CD8-positive, alpha-beta T cell (primary cell): ENCODE measurements at regions of chr11 and their contacts with region 1.

Region 1: DNA sequence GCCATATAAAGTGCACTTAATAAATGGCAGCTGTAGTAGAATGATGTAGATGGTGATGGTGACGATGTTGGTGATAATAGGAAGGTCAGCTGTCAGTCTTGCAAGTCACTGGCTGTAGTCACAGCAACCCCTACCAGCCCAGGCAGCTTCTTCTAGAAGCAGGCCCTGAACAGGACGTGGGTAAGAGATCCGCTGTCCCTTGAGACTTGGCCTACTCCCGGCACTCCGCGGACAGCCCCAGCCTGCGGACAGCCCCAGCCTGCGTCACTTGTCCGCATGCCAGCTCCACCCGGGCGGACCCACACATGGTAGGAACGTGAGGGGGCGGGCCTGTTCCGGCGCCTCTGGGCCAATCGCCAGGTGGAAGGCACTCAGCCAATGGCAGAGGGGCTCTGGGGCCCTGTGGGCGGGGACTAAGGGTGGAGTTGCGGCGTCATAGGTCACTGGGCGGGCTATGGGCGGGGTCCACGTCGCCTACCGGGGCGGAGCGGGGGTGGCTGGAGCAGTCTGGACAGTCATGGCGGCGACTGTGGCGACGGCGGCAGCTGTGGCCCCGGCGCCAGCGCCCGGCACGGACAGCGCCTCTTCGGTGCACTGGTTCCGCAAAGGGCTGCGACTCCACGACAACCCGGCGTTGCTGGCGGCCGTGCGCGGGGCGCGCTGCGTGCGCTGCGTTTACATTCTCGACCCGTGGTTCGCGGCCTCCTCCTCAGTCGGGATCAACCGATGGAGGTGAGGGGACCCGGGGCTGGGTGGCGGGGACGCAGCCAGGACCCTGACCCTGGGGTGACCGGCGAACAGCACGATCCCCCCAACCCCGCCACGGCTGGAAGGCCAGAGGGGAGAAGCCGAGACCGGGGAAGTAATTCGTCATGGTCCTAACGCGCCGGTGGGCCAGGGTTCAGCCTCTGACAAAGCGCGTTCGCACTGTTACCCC is at the start of gene CRY2:
- DNase-seq: peak; percentile 98 to 99 (median 98)
- ATAC-seq: peak; percentile 86
- H3K4me3 ChIP-seq: peak within 1 kb of the TSS; percentile 81 to 96
- H3K4me3 Mint-ChIP-seq: peak within 1 kb of the TSS; percentile 82
- H3K27ac ChIP-seq: peak within 1 kb of the TSS; percentile 88 to 96
- H3K27ac Mint-ChIP-seq: peak within 1 kb of the TSS; percentile 95
- H3K4me1 ChIP-seq: peaks cover 36% of the 10 kb centered on the region
- H3K4me1 Mint-ChIP-seq: peaks cover 56% of the 10 kb centered on the region
- H3K27me3 ChIP-seq: no peaks in the 10 kb centered on the region
- H3K27me3 Mint-ChIP-seq: no peaks in the 10 kb centered on the region
- CTCF ChIP-seq: no peak
- total RNA-seq, gene CRY2: 172 to 177 TPM

Region 2: DNA sequence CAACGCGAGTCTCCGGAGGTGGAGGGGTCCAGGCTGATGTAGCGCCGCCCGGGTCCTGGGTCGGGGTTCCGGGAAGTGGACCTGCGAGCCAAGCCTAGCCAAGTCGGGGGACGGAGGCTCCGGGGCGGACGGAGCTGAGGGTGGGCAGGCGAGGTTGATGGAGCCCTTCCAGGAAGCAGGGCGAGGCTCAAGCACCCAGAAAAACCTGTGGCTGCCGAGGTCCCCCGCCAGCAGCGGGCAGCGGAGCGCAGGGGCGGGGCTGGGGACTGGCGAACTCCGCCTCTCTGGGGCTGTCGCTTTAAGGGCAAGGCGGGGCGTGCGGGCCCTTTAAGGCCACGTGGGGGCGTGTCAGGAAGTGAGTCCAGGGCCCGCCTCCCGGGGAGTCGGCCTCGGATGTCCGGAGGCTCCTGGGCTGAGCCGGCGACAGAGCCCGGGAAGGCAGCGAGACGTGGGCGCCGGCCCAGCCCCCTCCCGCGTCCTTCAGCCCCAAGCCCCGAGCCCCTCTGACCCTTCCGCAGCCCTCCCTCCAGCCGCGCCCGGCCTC is 42.4 kb before region 1 on chr11 and contains the start of gene SLC35C1:
- CTCF ChIA-PET with region 1: interaction called, 4 read pairs
- POLR2A ChIA-PET with region 1: interaction called, 5 read pairs
- intact Hi-C with region 1: loop called (anchors 1 kb)
- DNase-seq: peak; percentile 89 to 98 (median 97)
- ATAC-seq: peak; percentile 96
- H3K4me3 ChIP-seq: peak within 1 kb of the TSS; percentile 97
- H3K4me3 Mint-ChIP-seq: peak within 1 kb of the TSS; percentile 90
- H3K27ac ChIP-seq: peak within 1 kb of the TSS; percentile 76 to 81
- H3K27ac Mint-ChIP-seq: peak within 1 kb of the TSS; percentile 81
- H3K4me1 ChIP-seq: peaks cover 32% of the 10 kb centered on the region
- H3K4me1 Mint-ChIP-seq: peaks cover 44% of the 10 kb centered on the region
- H3K27me3 ChIP-seq: no peaks in the 10 kb centered on the region
- H3K27me3 Mint-ChIP-seq: no peaks in the 10 kb centered on the region
- CTCF ChIP-seq: no peak
- total RNA-seq, gene SLC35C1: 3.1 to 3.3 TPM

Region 3: DNA sequence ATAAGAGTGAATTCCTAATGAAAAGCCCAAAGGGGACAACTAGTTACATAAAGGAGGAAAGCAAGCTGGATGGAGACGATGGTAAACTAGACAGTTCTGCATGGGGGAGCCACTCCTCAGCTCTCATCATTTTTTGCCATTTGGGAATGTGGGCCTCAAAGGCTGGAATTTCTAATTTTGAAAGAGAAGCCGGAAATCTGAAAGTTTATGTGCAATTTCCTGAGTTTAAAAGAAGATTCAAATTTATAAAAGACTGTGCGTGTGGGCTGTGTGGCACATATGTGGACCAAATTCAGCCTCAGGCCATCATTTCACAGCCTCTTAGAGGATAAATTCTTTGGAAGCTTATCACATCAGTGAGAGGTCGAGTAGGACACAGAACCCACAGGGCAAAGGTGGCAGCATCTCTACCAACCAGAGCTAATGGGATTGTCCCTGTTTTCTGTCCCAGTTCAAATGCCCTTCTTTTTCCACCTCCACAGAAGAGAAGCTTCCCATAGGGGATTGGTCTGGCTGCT is 18.2 kb before region 1 on chr11:
- CTCF ChIA-PET with region 1: interaction called, 14 read pairs
- POLR2A ChIA-PET with region 1: interaction called, 3 read pairs
- intact Hi-C with region 1: no loop called
- DNase-seq: no peak
- ATAC-seq: no peak
- H3K4me3 ChIP-seq: no peak overlapping the region
- H3K4me3 Mint-ChIP-seq: no peak overlapping the region
- H3K27ac ChIP-seq: no peak overlapping the region
- H3K27ac Mint-ChIP-seq: no peak overlapping the region
- H3K4me1 ChIP-seq: peaks cover under 1% of the 10 kb centered on the region
- H3K4me1 Mint-ChIP-seq: peaks cover 4% of the 10 kb centered on the region
- H3K27me3 ChIP-seq: peaks cover 0 to 3% of the 10 kb centered on the region in 2 experiments
- H3K27me3 Mint-ChIP-seq: peaks cover 20% of the 10 kb centered on the region
- CTCF ChIP-seq: no peak

Region 4: GRCh38 chr11:45885274-45885920 is 38.2 kb after region 1 on chr11 and contains the start of gene MAPK8IP1:
- CTCF ChIA-PET with region 1: no interaction called
- POLR2A ChIA-PET with region 1: no interaction called
- intact Hi-C with region 1: loop called (anchors 1 kb)
- DNase-seq: peak; percentile 14 to 76 (median 52)
- ATAC-seq: peak; percentile 85
- H3K4me3 ChIP-seq: peak within 1 kb of the TSS in 1 of 2 experiments; percentile 24
- H3K4me3 Mint-ChIP-seq: peak within 1 kb of the TSS; percentile 61
- H3K27ac ChIP-seq: no peak within 1 kb of the TSS
- H3K27ac Mint-ChIP-seq: no peak within 1 kb of the TSS
- H3K4me1 ChIP-seq: peaks cover 5% of the 10 kb centered on the region
- H3K4me1 Mint-ChIP-seq: peaks cover 10% of the 10 kb centered on the region
- H3K27me3 ChIP-seq: peaks cover 0 to 9% of the 10 kb centered on the region in 2 experiments
- H3K27me3 Mint-ChIP-seq: peaks cover 2% of the 10 kb centered on the region
- CTCF ChIP-seq: no peak
- total RNA-seq, gene MAPK8IP1: 6.5 to 8.4 TPM

Region 5: DNA sequence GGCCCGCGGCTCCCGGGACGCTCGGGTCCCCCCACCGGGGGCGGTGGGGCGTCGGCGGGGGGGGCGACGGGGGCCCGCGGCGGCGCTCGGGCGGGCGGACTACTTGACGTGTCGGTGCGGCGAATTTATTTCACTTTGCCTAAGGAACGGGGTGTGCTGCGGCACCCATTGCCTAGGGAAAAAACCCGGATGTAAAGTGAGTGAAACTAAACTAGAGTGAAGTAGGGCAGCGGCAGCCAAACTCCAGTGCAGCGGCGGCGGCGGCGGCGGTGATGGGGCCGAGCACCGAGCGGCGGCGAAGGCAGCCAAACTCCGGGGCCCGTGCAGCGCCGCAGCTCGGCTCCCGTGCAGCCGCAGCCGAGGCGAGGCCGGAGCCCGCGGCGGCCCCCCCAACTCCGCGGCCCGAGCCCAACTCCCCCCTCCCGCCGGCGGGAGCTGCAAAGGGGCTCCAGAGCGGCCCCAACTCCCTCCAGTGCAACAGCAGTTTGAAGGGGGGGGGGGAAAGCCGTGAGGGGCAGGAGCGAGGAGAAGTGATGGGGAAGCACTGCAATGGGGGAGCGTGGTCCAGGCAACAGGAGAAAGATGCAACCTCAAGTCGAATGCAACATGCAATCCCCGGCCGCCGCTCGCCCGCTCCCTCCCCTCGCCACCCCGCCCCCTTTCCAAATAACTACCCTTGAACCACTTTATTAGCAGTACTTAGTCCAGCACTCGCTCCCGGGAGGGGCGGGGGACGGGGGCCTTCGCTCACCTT is 274.7 kb after region 1 on chr11:
- CTCF ChIA-PET with region 1: no interaction called
- POLR2A ChIA-PET with region 1: no interaction called
- intact Hi-C with region 1: loop called (anchors 2 to 5 kb)
- DNase-seq: peak; percentile 50 to 92 (median 73)
- ATAC-seq: peak; percentile 54
- H3K4me3 ChIP-seq: peak overlapping the region; percentile 58 to 63
- H3K4me3 Mint-ChIP-seq: peak overlapping the region; percentile 88
- H3K27ac ChIP-seq: peak overlapping the region; percentile 1 to 26
- H3K27ac Mint-ChIP-seq: peak overlapping the region; percentile 96
- H3K4me1 ChIP-seq: peaks cover 30% of the 10 kb centered on the region
- H3K4me1 Mint-ChIP-seq: peaks cover 33% of the 10 kb centered on the region
- H3K27me3 ChIP-seq: no peaks in the 10 kb centered on the region
- H3K27me3 Mint-ChIP-seq: no peaks in the 10 kb centered on the region
- CTCF ChIP-seq: no peak

Region 6: GRCh38 chr11:46200537-46201281 is 353.5 kb after region 1 on chr11:
- CTCF ChIA-PET with region 1: no interaction called
- POLR2A ChIA-PET with region 1: no interaction called
- intact Hi-C with region 1: no loop called
- DNase-seq: no peak
- ATAC-seq: no peak
- H3K4me3 ChIP-seq: no peak overlapping the region
- H3K4me3 Mint-ChIP-seq: no peak overlapping the region
- H3K27ac ChIP-seq: no peak overlapping the region
- H3K27ac Mint-ChIP-seq: no peak overlapping the region
- H3K4me1 ChIP-seq: no peaks in the 10 kb centered on the region
- H3K4me1 Mint-ChIP-seq: no peaks in the 10 kb centered on the region
- H3K27me3 ChIP-seq: no peaks in the 10 kb centered on the region
- H3K27me3 Mint-ChIP-seq: peaks cover 35% of the 10 kb centered on the region
- CTCF ChIP-seq: no peak

Region 7: DNA sequence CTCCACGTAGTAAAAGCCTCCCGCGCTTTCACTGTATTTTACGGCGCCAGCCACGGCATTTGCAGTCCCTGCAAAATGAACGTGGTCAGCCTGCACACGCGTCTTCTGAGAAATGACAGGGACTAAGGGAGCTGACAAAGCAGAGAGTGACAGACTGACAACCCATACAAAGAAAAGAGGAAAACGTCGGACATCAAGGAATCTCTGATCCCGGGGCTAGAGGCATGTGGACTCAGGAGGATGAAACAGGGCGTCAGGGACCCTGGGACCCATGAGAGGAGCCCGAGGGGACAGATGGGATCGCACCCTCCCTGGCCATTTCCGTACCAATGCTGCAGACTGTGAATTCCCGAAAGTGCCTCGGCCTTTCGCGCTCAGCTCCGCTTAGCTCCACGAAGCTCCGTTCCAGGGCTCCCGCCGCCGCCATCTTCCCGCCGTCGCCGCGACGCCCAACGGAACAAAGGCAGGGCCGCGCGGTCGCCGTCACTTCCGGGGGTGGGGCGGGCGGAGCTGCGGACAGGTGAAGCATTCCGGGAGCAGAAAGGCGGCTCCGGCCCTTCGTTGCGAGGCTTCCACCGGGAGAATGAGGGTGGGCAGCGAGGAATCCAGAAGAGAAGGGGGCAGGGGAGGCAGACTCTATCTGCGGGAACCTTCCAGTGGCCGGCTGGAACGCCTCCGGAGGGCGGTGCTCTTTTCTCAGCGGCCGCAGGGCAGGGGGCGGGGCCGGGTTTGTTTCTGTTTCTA is 2000.8 kb after region 1 on chr11 and contains the start of gene NUP160:
- CTCF ChIA-PET with region 1: no interaction called
- POLR2A ChIA-PET with region 1: no interaction called
- intact Hi-C with region 1: loop called in 1 of 2 experiments (anchors 10 kb)
- DNase-seq: peak; percentile 70 to 92 (median 88)
- ATAC-seq: peak; percentile 87
- H3K4me3 ChIP-seq: peak within 1 kb of the TSS; percentile 89 to 99
- H3K4me3 Mint-ChIP-seq: peak within 1 kb of the TSS; percentile 100
- H3K27ac ChIP-seq: peak within 1 kb of the TSS; percentile 88 to 95
- H3K27ac Mint-ChIP-seq: peak within 1 kb of the TSS; percentile 99
- H3K4me1 ChIP-seq: peaks cover 35% of the 10 kb centered on the region
- H3K4me1 Mint-ChIP-seq: peaks cover 45% of the 10 kb centered on the region
- H3K27me3 ChIP-seq: no peaks in the 10 kb centered on the region
- H3K27me3 Mint-ChIP-seq: no peaks in the 10 kb centered on the region
- CTCF ChIP-seq: no peak
- total RNA-seq, gene NUP160: 38.6 to 46.6 TPM